Activated CD4-positive, alpha-beta T cell treated with anti-CD3 and anti-CD28 coated beads for 36 hours (primary cell): ENCODE measurements at regions of chr1 and their contacts with region 1.

Region 1: GRCh38 chr1:42173155-42173933 is 8.8 kb upstream of the GUCA2A start:
- DNase-seq: peak; percentile 81
- ATAC-seq: peak; percentile 82
- H3K4me3 Mint-ChIP-seq: no peak overlapping the region
- H3K27ac Mint-ChIP-seq: no peak overlapping the region
- H3K4me1 Mint-ChIP-seq: no peaks in the 10 kb centered on the region
- H3K27me3 Mint-ChIP-seq: peaks cover 3% of the 10 kb centered on the region

Region 2: DNA sequence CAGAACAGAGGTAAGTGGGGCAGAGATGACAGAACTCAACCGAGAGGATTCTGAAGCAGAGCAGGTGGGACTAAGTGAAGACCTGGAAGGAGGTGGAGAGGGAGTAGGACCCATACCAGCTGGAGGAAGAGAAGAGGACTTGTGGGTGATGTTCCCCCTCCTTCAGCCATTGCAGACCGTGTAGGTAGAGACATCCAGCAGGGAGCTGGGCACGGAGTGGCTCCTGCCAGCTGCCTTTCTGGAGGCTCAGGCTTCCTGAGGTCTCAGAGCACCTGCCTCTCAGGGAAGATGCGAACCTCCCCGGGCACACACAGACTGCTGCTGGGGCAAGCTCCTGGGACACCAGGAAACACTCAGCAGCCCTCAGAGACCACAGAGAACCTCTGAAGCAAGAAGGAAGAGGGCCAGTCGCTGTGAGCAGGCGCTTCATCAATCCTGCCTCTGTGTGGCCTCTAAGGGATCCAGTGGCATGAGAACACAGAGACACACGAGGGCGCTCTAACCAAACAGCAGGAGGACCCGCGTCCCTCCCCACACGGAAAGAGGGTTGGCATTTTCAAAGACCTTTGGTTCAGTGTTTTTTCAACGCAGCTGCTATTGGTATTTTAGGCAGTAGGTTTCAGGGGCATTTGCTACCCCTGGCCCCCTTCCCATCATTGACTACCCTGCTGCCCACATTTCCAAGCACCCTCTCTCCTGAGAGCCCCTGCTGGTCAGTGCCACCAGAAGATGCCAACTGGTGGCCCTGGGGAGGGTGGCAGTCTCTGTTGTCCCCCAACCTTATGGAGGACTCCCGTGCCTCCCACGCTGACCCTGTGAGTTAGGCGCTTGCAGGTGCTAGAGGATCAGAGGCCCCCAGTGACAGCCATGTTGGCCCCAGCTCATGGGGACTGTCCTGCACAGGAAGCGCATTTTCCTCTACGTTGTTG is 599.3 kb before region 1 on chr1:
- CTCF ChIA-PET with region 1: interaction called, 14 read pairs
- POLR2A ChIA-PET with region 1: no interaction called
- intact Hi-C with region 1: loop called (anchors 1 kb)
- DNase-seq: peak; percentile 90
- ATAC-seq: peak; percentile 93
- H3K4me3 Mint-ChIP-seq: no peak overlapping the region
- H3K27ac Mint-ChIP-seq: peak overlapping the region; percentile 17
- H3K4me1 Mint-ChIP-seq: peaks cover 41% of the 10 kb centered on the region
- H3K27me3 Mint-ChIP-seq: no peaks in the 10 kb centered on the region

Region 3: DNA sequence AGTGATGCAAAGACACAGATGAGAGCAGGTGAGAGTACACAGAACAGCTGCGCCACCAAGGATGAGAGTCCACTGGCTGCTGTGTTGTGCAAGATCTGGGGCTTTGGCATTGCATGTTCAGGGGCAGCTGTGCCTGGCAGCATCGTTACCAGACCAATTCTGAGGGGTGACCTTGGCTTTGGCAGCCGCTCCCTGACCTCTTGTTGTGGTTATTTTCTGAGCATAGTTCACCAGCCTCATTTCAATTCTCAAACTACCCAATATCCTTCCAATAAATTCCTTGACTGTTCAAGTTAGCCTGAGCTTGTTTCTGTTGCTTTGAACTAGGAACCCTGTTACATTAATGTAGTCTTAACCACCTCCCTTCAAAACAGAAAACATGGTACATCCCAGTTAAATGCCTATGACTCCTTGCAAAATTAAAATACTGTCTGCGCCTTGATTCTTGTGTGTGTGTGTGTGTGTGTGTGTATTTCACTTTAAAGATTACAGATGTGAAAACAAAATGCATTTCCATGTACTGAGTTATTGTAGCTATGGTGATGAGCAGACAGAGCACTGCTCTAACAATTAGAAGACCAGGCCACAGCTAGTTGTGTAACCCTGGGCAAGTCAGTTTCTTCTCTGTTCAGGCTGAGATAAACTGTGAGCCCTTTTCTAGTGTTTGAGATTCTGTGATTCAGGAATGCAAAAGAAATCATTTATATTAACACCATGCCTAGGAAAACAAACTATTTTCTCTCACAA is 126.4 kb before region 1 on chr1:
- CTCF ChIA-PET with region 1: no interaction called
- POLR2A ChIA-PET with region 1: no interaction called
- intact Hi-C with region 1: no loop called
- DNase-seq: no peak
- ATAC-seq: no peak
- H3K4me3 Mint-ChIP-seq: no peak overlapping the region
- H3K27ac Mint-ChIP-seq: no peak overlapping the region
- H3K4me1 Mint-ChIP-seq: no peaks in the 10 kb centered on the region
- H3K27me3 Mint-ChIP-seq: peaks cover 41% of the 10 kb centered on the region

Region 4: DNA sequence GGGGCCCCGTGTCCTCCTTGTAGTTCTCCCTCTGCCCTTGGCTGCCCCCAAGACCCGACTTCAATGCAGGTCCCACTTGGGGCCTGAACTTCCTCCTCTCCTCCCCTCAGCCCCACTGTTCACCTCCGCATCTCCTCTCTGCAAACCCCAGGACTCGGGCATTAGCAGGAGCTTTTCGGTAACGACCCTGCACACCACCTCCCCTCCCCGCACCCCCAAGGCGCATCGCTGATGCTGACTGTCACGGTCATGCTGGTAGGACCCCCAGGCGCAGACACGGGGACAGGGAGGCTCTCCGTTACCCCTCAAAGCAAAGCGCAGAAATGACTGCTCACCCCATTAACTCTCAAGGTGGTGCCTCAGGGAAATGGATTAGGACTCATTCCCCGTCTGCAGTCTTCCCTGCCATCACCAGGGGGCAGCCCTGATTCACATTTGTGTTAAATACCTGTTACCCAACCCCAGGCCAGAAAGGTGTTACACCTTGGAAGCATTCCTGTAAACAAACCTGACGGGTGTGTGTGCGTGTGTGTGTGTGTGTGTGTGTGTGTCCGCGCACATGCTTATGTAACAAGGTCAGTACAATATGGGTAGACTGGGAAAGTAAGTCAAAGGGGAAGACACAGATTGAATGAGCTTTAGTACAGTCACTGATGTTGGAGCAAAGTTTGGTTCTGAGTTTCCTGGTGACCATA is 26.6 kb before region 1 on chr1:
- CTCF ChIA-PET with region 1: interaction called, 15 read pairs
- POLR2A ChIA-PET with region 1: no interaction called
- intact Hi-C with region 1: loop called (anchors 1 to 2 kb)
- DNase-seq: peak; percentile 84
- ATAC-seq: peak; percentile 84
- H3K4me3 Mint-ChIP-seq: no peak overlapping the region
- H3K27ac Mint-ChIP-seq: no peak overlapping the region
- H3K4me1 Mint-ChIP-seq: peaks cover 7% of the 10 kb centered on the region
- H3K27me3 Mint-ChIP-seq: peaks cover 14% of the 10 kb centered on the region

Region 5: GRCh38 chr1:42186152-42186551 is 12.8 kb after region 1 on chr1:
- CTCF ChIA-PET with region 1: interaction called, 15 read pairs
- POLR2A ChIA-PET with region 1: no interaction called
- intact Hi-C with region 1: no loop called
- DNase-seq: no peak
- ATAC-seq: peak; percentile 79
- H3K4me3 Mint-ChIP-seq: no peak overlapping the region
- H3K27ac Mint-ChIP-seq: peak overlapping the region; percentile 60
- H3K4me1 Mint-ChIP-seq: peaks cover 7% of the 10 kb centered on the region
- H3K27me3 Mint-ChIP-seq: no peaks in the 10 kb centered on the region

Region 6: GRCh38 chr1:42282024-42282579 is 108.8 kb after region 1 on chr1:
- CTCF ChIA-PET with region 1: no interaction called
- POLR2A ChIA-PET with region 1: no interaction called
- intact Hi-C with region 1: no loop called
- DNase-seq: no peak
- ATAC-seq: no peak
- H3K4me3 Mint-ChIP-seq: no peak overlapping the region
- H3K27ac Mint-ChIP-seq: peak overlapping the region; percentile 75
- H3K4me1 Mint-ChIP-seq: peaks cover 54% of the 10 kb centered on the region
- H3K27me3 Mint-ChIP-seq: no peaks in the 10 kb centered on the region